OCI-LY7 (cell line): ENCODE measurements at regions of chr15 and their contacts with region 1.

Region 1: DNA sequence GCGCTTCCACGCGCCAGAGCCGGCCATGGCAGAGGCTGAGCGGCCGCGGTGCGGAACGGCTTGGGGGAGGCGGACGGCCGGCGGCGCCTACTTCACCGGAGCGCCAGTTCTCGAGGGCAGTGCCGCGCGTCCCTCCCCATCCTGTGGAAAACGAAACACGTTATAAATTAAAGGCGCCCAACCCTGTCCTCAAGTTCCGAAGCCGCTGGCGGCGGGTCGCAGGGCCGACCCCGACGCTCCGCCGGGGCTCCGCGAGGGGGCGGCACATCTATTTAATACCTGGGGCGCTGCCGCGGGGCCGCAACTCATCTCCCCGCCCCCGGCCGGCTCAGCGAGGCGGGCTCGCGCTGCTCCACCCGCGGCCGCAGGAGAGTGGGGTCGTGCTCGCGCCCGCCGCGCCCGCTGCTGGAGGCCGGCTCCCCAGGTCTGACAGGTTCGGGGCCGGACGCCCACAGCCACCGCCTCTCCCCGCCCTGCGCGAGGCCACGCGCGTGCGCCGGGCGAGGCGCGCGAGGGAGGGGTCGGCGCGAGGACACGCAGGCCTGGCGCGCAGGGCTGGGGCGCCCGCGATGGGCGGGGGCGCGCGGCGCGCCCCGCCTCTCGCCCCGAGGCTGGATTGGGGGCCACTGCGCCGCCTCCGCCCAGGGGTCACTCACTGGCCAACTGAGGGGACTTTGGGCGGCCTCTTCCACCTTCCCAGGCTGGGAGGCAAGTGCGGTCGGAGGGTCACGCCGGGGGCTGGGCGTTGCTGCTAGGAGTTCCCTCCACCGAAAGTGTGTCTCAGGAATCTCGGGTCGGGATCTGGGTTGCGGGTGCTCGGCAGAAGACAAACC is at the start of gene SLC30A4:
- DNase-seq: peak; percentile 57
- H3K4me3 ChIP-seq: peak within 1 kb of the TSS; percentile 67
- H3K27ac ChIP-seq: no peak within 1 kb of the TSS
- H3K4me1 ChIP-seq: peaks cover 15% of the 10 kb centered on the region
- CTCF ChIP-seq: peak; percentile 63
- total RNA-seq, gene SLC30A4: 0.13 TPM in 2 replicates

Region 2: DNA sequence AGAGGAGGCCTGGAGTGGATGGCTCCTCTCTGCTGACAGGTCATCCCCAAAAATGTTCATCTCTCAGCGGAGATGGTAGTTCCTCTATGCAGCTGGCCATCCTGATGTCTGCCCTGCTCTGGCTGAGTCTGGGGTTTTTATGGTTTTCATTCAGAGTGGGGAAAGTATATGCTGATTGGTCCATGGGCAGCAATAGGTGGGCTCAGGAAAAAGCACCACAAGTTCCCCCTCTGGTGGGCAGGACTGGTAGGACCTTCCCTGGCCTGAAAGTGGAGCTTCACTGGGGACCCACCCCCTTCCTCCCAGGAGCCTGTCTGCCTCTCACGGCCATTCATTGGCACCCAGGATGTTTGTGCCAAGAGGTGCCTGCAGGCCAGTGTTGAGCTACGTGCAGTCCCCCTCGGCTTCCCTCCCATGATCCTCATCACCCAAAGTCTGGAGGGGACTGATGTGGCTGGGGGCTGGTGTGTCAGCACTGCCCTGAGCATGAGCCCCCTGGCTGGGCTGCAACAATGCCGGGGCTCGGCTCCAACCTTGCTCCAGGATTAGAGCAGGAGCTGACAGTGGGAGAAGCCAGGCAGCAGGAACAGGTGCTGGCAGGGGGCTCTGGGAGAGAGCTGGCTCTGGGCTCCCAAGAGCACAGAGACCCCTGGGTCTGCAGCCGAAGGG is 51.6 kb after region 1 on chr15:
- CTCF ChIA-PET with region 1: no interaction called
- POLR2A ChIA-PET with region 1: no interaction called
- intact Hi-C with region 1: loop called (anchors 5 kb)
- DNase-seq: peak; percentile 55
- H3K4me3 ChIP-seq: no peak overlapping the region
- H3K27ac ChIP-seq: no peak overlapping the region
- H3K4me1 ChIP-seq: peaks cover 10% of the 10 kb centered on the region
- CTCF ChIP-seq: peak; percentile 38

Region 3: GRCh38 chr15:45641374-45641781 is 118.8 kb after region 1 on chr15:
- CTCF ChIA-PET with region 1: no interaction called
- POLR2A ChIA-PET with region 1: no interaction called
- intact Hi-C with region 1: no loop called
- DNase-seq: no peak
- H3K4me3 ChIP-seq: no peak overlapping the region
- H3K27ac ChIP-seq: no peak overlapping the region
- H3K4me1 ChIP-seq: peaks cover 8% of the 10 kb centered on the region
- CTCF ChIP-seq: no peak

Region 4: GRCh38 chr15:45666119-45666875 is 143.8 kb after region 1 on chr15:
- CTCF ChIA-PET with region 1: no interaction called
- POLR2A ChIA-PET with region 1: no interaction called
- intact Hi-C with region 1: no loop called
- DNase-seq: no peak
- H3K4me3 ChIP-seq: no peak overlapping the region
- H3K27ac ChIP-seq: no peak overlapping the region
- H3K4me1 ChIP-seq: no peaks in the 10 kb centered on the region
- CTCF ChIP-seq: peak; percentile 42